PC-3 (cell line): ENCODE measurements at regions of chr9 and their contacts with region 1.

Region 1: GRCh38 chr9:26261503-26262330 is 583.5 kb upstream of the TUSC1 start:
- DNase-seq: peak; percentile 86
- ATAC-seq: peak; percentile 59
- H3K4me3 ChIP-seq: peak overlapping the region; percentile 41; the same call in 1 of the 2 replicates
- H3K27ac ChIP-seq: peak overlapping the region; percentile 94
- H3K4me1 ChIP-seq: peaks cover 88% of the 10 kb centered on the region
- H3K27me3 ChIP-seq: no peaks in the 10 kb centered on the region
- CTCF ChIP-seq: no peak

Region 2: GRCh38 chr9:25964239-25964638 is 297.5 kb before region 1 on chr9:
- CTCF ChIA-PET with region 1: no interaction called
- POLR2A ChIA-PET with region 1: no interaction called
- intact Hi-C with region 1: loop called (anchors 10 kb)
- DNase-seq: peak; percentile 90
- ATAC-seq: peak; percentile 86
- H3K4me3 ChIP-seq: no peak overlapping the region
- H3K27ac ChIP-seq: peak overlapping the region; percentile 23
- H3K4me1 ChIP-seq: no peaks in the 10 kb centered on the region
- H3K27me3 ChIP-seq: no peaks in the 10 kb centered on the region
- CTCF ChIP-seq: peak; percentile 73

Region 3: GRCh38 chr9:26175264-26175663 is 86.5 kb before region 1 on chr9:
- CTCF ChIA-PET with region 1: no interaction called
- POLR2A ChIA-PET with region 1: interaction called, 3 read pairs
- intact Hi-C with region 1: loop called (anchors 5 kb)
- DNase-seq: peak; percentile 86
- ATAC-seq: peak; percentile 78
- H3K4me3 ChIP-seq: no peak overlapping the region
- H3K27ac ChIP-seq: peak overlapping the region; percentile 81
- H3K4me1 ChIP-seq: peaks cover 49% of the 10 kb centered on the region
- H3K27me3 ChIP-seq: no peaks in the 10 kb centered on the region
- CTCF ChIP-seq: no peak

Region 4: DNA sequence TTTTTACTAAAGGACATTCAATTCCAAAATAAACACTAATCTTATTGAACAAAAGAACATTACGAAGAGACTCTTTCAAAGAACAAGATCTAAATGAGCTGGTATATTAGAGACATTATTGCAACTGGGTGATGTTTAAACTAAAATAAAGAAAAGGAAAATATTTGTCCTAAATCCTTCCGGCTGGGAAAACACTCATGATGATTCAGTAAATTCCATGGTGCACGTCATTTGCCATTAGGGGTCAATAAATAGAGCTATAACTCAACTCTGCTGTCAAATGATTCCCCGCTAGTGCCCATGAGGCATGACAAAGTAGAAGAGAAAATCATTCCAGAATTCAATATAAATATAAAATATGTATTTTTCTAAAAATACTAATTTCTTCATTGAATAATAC is 18.0 kb before region 1 on chr9:
- CTCF ChIA-PET with region 1: interaction called, 3 read pairs
- POLR2A ChIA-PET with region 1: no interaction called
- intact Hi-C with region 1: loop called (anchors 1 kb)
- DNase-seq: peak; percentile 81
- ATAC-seq: peak; percentile 61
- H3K4me3 ChIP-seq: peak overlapping the region; percentile 35; the same call in 1 of the 2 replicates
- H3K27ac ChIP-seq: peak overlapping the region; percentile 88
- H3K4me1 ChIP-seq: peaks cover 23% of the 10 kb centered on the region
- H3K27me3 ChIP-seq: no peaks in the 10 kb centered on the region
- CTCF ChIP-seq: no peak